AG04449 (cell line): ENCODE measurements at regions of chr19 and their contacts with region 1.

Region 1: GRCh38 chr19:41821003-41821735 is 23.3 kb downstream of the LYPD4 start:
- DNase-seq: no peak
- H3K4me3 ChIP-seq: no peak overlapping the region
- CTCF ChIP-seq: peak; percentile 31

Region 2: DNA sequence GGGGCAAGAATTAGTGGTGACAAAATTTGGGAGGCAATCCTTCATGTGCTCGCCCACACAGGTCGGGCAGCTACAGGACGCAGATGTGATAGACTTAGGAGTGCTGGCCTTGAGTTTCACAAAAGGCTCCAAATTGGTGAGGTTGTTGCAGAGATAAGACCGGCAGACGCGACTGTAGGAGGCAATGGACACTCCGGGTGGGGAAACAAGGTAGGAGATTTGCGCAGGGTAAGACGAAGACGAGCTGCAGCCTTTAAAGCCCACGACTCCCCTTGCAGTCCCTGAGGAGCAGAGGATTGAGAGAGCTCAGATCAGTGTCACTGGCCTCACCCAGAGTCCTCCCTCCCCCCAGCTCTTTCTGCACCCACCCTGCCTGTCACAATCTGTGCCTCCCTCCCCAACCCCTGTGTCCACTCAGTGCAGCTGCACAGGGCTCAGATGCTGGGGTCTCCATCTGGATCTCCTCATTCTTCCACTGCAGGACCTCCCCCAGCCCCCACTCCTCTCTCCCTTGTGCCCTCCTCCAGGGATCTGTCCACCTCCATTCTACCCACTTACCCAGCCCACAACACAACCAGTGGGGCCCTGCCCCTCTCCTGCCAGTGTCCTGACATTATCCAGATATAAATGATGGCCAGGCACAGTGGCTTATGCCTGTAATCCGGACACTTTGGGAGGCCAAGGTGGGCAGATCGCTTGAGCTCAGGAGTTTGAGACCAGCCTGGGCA is 17.0 kb after region 1 on chr19:
- CTCF ChIA-PET with region 1: interaction called, 29 read pairs
- POLR2A ChIA-PET with region 1: no interaction called
- DNase-seq: no peak
- H3K4me3 ChIP-seq: no peak overlapping the region
- CTCF ChIP-seq: no peak